IMR-90 (cell line): ENCODE measurements at regions of chr15 and their contacts with region 1.

Region 1: DNA sequence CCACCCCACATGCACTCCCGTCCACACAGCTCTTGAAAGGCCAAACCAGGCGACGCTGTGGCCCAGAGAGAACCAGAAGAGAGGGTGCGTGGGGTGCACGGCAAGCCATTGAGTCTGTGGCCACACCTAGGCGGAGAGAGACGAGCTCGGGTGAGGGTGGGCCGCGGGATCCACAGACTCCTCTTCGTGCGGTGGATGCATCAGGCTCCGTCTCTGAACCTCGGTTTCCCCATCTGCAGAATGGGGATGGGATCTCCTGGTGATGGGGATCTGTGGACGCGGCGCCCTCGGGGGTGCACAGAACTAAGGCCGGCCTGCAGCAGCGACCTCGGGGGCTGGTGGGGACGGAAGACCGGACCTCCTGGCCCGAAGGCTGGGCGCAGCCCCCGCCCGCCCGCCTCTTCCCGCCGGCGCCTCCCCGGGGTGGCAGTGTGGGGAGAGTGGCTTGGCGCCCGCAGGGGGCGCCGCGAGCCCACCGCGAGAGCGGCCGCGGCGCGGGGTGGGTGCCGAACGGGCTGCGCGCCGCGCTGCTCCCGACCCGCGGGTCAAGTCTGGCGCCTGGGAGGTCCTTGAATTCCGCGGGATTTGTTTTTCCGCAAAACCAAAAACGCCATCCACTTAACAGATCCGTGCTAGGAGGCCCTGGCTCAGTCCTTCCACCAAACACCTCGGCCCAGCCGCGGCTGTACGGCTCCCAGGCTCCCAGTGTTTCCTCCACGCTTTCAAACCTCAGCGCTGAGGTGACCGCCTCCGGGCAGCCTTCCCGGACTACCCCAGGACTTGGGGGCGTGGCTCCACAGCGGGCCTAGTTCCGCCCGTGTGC is 13.2 kb upstream of the ADPGK start:
- DNase-seq: peak; percentile 16
- ATAC-seq: peak; percentile 91
- H3K4me3 ChIP-seq: peak overlapping the region; percentile 53
- H3K27ac ChIP-seq: no peak overlapping the region; the same call in 1 of the 2 replicates
- H3K4me1 ChIP-seq: peaks cover 12% of the 10 kb centered on the region
- H3K27me3 ChIP-seq: no peaks in the 10 kb centered on the region; the same call in 1 of the 2 replicates
- CTCF ChIP-seq: peak; percentile 73
- POLR2A ChIP-seq: no peak
- RAD21 ChIP-seq: peak; percentile 84

Region 2: DNA sequence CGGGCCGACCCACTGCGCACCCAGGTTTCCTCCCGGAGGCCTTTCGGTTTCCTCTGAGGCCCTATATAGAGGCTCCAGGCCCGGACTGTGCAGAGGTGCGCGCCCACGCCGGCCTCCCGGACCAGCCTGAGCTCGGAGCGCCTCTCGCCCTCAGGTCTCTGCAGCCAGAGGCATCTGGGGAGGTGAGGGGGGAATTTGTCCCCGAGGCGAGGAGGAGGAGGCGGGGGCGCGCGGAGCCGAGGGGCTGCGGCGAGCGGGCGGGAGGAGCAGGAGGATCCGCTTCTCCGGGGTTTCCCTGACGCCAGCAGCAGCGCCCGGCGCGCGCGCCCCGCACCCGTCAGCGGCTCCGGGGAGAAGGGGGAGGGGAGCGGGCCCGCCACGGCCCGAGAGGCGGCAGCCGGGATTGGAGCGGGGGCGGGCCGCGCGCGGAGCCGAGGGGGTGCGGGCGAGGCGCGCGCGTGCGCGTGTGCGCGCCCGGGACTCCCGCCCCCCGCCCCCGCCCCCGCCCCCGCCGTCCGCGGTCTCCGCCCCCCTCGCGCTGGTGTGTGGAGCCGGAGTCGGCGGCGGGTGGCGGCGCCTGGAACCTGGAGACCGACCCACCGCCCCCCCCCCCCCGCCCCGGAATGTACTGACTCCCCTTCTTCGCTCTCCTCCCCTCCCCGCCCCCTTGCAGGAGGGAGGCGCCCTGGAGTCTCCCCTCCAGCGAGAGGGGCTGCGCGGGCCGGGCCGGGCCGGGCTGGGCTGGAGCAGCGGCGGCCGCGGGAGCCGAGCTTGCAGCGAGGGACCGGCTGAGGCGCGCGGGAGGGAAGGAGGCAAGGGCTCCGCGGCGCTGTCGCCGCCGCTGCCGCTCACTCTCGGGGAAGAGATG is 255.3 kb after region 1 on chr15 and contains the start of gene NEO1:
- CTCF ChIA-PET with region 1: no interaction called
- POLR2A ChIA-PET with region 1: interaction called, 3 read pairs
- dilution Hi-C with region 1: no loop called
- in situ Hi-C with region 1: no loop called
- intact Hi-C with region 1: loop called (anchors 2 kb)
- DNase-seq: peak; percentile 70
- ATAC-seq: peak; percentile 93
- H3K4me3 ChIP-seq: peak within 1 kb of the TSS; percentile 90
- H3K27ac ChIP-seq: peak within 1 kb of the TSS; percentile 91
- H3K4me1 ChIP-seq: peaks cover 2% of the 10 kb centered on the region; the same call in 1 of the 2 replicates
- H3K27me3 ChIP-seq: peaks cover 10% of the 10 kb centered on the region
- CTCF ChIP-seq: no peak
- POLR2A ChIP-seq: no peak
- RAD21 ChIP-seq: no peak
- total RNA-seq, gene NEO1: 16.3 and 18.3 TPM in 2 replicates